ENCODE measurements at regions of chr17 and their contacts with region 1.

Region 1: DNA sequence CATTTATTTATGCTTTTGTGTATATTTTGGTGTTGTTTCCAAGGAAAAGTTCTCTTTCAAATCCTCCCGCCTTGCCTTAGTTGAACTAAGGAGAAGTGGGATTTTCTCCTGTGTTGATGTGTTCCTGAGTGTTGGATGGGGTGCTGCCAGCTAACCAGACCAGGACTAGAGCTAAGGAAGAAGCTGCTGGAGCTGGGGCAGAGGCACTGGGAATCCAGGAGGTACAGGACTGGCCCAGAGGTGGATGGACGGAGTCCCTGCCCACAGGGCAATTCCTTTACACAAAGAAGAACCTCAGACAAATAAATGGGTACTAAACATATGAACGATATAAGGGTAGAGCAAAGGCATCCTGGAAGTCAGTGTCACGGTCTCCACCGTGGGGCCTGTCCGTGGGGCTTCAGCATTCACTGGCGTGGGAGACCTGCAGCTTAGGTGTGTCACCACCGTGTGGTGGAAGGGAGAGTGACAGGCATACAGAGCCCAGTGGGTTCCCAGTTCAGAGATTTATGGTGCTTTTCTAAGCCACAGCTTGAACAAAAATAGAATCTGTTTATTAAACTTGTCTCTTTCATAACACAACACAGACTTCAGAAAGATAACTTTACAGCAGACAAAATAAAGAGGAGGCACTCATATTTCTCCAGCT is 270.7 kb downstream of the NTN1 start:
- DNase-seq: no peak
- ATAC-seq: peak; percentile 78
- H3K4me3 ChIP-seq: no peak overlapping the region
- H3K27ac ChIP-seq: no peak overlapping the region
- H3K4me1 ChIP-seq: peaks cover 18% of the 10 kb centered on the region
- H3K27me3 ChIP-seq: no peaks in the 10 kb centered on the region
- CTCF ChIP-seq: peak; percentile 84 to 87 (median 84)
- EP300 ChIP-seq: no peak
- POLR2A ChIP-seq: no peak
- RAD21 ChIP-seq: peak; percentile 74

Region 2: DNA sequence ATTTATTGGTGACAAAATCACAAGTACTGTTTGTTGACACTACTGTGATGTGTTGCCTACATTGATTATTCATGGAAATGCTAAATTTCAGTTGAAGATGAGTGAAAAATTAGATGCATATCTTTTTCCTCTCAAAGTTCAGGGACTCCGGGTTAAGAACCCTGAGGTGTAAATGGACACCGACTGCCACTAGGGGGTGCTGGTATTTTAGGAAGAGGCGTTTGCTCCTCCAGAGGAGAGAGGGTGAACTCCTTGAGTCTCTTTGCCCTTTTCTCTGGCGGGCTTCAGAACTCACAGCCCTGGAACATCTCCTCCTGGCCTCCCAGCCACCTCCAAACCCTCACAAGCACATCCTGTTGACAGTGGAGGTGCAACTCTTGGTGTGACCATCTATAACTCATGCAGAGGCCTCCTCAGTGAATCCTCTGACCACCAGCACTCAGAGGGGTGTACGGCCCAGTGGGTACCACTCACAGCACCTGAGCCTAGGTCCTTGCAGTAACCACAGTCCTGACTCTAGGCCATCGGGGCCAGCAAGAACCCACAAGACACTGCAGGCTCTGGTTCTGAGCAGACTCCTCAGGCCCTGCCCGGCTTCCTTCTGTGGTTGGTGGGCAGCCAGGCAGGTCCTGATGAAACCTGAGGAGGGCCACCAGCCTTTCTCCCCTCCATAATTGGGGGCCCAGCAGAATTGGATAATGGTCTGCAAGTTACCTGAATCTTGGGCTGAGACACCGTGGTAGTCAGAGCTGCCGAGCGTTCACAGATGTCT is 300.3 kb before region 1 on chr17:
- CTCF ChIA-PET with region 1: interaction called, 13 read pairs
- POLR2A ChIA-PET with region 1: no interaction called
- RAD21 ChIA-PET with region 1: interaction called, 5 read pairs
- SMC1A ChIA-PET with region 1: interaction called, 7 read pairs
- in situ Hi-C with region 1: no loop called
- intact Hi-C with region 1: loop called (anchors 5 kb)
- DNase-seq: no peak
- ATAC-seq: peak; percentile 74
- H3K4me3 ChIP-seq: no peak overlapping the region
- H3K27ac ChIP-seq: no peak overlapping the region
- H3K4me1 ChIP-seq: peaks cover 12% of the 10 kb centered on the region
- H3K27me3 ChIP-seq: no peaks in the 10 kb centered on the region
- CTCF ChIP-seq: peak; percentile 38 to 77 (median 71)
- EP300 ChIP-seq: no peak
- POLR2A ChIP-seq: no peak
- RAD21 ChIP-seq: peak; percentile 57

Region 3: GRCh38 chr17:9200699-9201359 is 91.2 kb before region 1 on chr17:
- CTCF ChIA-PET with region 1: interaction called, 33 read pairs
- POLR2A ChIA-PET with region 1: interaction called, 11 read pairs
- RAD21 ChIA-PET with region 1: interaction called, 28 read pairs
- SMC1A ChIA-PET with region 1: interaction called, 32 read pairs
- in situ Hi-C with region 1: no loop called
- intact Hi-C with region 1: no loop called
- DNase-seq: peak; percentile 31
- ATAC-seq: peak; percentile 80
- H3K4me3 ChIP-seq: no peak overlapping the region
- H3K27ac ChIP-seq: no peak overlapping the region
- H3K4me1 ChIP-seq: peaks cover 14% of the 10 kb centered on the region
- H3K27me3 ChIP-seq: peaks cover 0 to 1% of the 10 kb centered on the region in 2 experiments; a peak in 1 of 4 replicates
- CTCF ChIP-seq: no peak
- EP300 ChIP-seq: no peak
- POLR2A ChIP-seq: no peak
- RAD21 ChIP-seq: no peak

Region 4: DNA sequence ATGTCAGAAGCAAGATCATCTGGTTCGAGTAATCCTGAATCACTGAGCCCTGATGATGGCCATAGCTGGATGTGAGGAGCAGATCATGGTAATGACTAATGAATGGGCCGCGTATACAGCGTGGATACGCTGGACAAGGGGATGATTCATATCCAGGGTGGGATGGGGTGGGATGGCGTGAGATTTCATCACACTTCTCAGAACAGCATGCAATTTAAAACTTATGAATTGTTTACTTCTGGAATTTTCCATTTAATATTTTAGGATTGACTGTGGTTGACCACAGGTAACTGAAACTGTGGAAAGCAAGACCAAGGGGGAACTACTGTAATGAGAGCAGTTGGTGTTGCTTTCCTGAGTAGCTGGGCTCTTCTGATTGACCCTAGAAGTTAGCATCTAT is 58.0 kb after region 1 on chr17:
- CTCF ChIA-PET with region 1: no interaction called
- POLR2A ChIA-PET with region 1: no interaction called
- RAD21 ChIA-PET with region 1: no interaction called
- SMC1A ChIA-PET with region 1: no interaction called
- in situ Hi-C with region 1: no loop called
- intact Hi-C with region 1: no loop called
- DNase-seq: no peak
- ATAC-seq: no peak
- H3K4me3 ChIP-seq: no peak overlapping the region
- H3K27ac ChIP-seq: no peak overlapping the region
- H3K4me1 ChIP-seq: peaks cover 5% of the 10 kb centered on the region; the same call in 1 of the 2 replicates
- H3K27me3 ChIP-seq: no peaks in the 10 kb centered on the region
- CTCF ChIP-seq: no peak
- EP300 ChIP-seq: no peak
- POLR2A ChIP-seq: no peak
- RAD21 ChIP-seq: no peak

Region 5: GRCh38 chr17:9389110-9389509 is 97.1 kb after region 1 on chr17:
- CTCF ChIA-PET with region 1: interaction called, 4 read pairs
- POLR2A ChIA-PET with region 1: no interaction called
- RAD21 ChIA-PET with region 1: interaction called, 3 read pairs
- SMC1A ChIA-PET with region 1: interaction called, 4 read pairs
- in situ Hi-C with region 1: no loop called
- intact Hi-C with region 1: loop called (anchors 5 kb)
- DNase-seq: peak; percentile 68
- ATAC-seq: peak; percentile 100
- H3K4me3 ChIP-seq: no peak overlapping the region
- H3K27ac ChIP-seq: no peak overlapping the region
- H3K4me1 ChIP-seq: peaks cover 8% of the 10 kb centered on the region
- H3K27me3 ChIP-seq: no peaks in the 10 kb centered on the region
- CTCF ChIP-seq: no peak; a peak in 1 of 6 replicates
- EP300 ChIP-seq: peak in 1 of 2 experiments; percentile 40; a peak in 1 of 4 replicates
- POLR2A ChIP-seq: no peak
- RAD21 ChIP-seq: no peak

Region 6: DNA sequence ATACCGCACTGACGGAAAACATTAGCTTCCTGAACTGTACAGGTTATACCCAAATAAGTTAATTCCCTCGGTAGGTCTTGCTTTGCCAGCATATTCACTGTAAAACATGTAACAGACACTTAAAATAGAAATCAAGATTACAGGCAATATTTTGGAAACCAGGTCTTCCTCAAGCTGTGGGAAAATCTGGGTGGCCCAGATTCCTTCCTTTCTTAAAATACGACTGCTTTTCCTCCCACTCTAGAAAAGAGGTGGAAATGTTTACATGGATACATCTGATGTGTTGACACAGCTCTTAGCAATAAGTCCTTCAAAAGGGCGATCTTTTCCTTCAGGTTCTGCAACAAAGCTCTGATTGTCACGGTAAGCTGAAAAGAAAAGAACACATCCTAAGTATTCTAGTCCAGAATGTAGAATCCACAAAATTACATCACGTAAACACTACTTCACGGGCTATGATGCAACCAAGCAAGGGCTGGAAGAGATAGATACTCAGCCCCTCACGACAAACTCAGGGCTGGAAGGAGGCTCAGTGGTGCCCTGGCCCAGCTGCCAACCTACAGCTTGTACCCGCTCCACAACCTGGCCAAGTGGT is 265.2 kb after region 1 on chr17:
- CTCF ChIA-PET with region 1: interaction called, 10 read pairs
- POLR2A ChIA-PET with region 1: no interaction called
- RAD21 ChIA-PET with region 1: no interaction called
- SMC1A ChIA-PET with region 1: interaction called, 4 read pairs
- in situ Hi-C with region 1: no loop called
- intact Hi-C with region 1: no loop called
- DNase-seq: no peak
- ATAC-seq: no peak
- H3K4me3 ChIP-seq: no peak overlapping the region
- H3K27ac ChIP-seq: no peak overlapping the region
- H3K4me1 ChIP-seq: no peaks in the 10 kb centered on the region
- H3K27me3 ChIP-seq: no peaks in the 10 kb centered on the region
- CTCF ChIP-seq: no peak
- EP300 ChIP-seq: no peak
- POLR2A ChIP-seq: no peak
- RAD21 ChIP-seq: no peak